Activated CD8-positive, alpha-beta T cell treated with anti-CD3 and anti-CD28 coated beads, Interleukin-2, amount 10 ng/mL, durations not matched to agents 7 days and 5 days (primary cell): ENCODE measurements at regions of chr1 and their contacts with region 1.

Region 1: GRCh38 chr1:2586154-2587070 is at the start of gene PRXL2B:
- DNase-seq: peak; percentile 99
- ATAC-seq: peak; percentile 86
- H3K4me3 Mint-ChIP-seq: peak within 1 kb of the TSS; percentile 82
- H3K27ac Mint-ChIP-seq: peak within 1 kb of the TSS; percentile 93
- H3K4me1 Mint-ChIP-seq: peaks cover 32% of the 10 kb centered on the region
- H3K27me3 Mint-ChIP-seq: no peaks in the 10 kb centered on the region
- total RNA-seq, gene PRXL2B: 35.6 to 40.6 TPM

Region 2: DNA sequence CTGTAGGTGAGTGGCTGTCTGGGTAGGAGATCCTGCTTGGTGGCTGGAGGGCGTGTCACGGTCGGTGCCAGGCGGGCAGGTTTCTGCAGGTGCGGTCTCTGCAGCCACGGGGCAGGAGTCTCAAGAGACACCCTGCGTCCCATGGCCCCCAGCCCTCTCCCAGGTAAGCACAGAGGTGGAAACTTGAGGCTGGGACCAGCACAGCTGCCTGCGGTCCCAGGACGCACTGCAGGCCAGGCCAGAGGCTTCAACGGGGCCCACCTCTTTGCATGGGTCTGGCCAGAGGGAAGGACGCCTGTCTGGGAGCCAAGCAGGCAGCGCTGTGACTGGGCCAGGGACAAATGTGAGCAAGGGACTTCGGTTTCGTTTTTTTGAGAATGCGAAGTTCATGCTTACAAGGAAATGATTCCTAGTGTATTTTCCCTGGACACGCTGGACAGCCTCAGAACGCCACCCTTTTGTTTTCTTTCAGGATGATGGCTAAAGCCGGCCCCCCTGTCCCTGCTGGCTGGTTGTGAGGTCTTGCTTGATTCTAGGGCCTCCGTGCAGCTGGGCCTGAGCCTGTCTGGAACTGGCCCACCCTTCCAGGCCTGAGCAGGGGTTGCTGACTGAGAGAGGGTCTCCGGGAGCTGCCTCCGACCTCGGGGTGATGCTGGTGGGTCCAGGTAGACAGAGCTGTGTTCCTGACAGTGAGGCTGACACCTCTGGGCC is 233.4 kb before region 1 on chr1:
- CTCF ChIA-PET with region 1: no interaction called
- POLR2A ChIA-PET with region 1: no interaction called
- DNase-seq: no peak
- ATAC-seq: no peak
- H3K4me3 Mint-ChIP-seq: no peak overlapping the region
- H3K27ac Mint-ChIP-seq: no peak overlapping the region
- H3K4me1 Mint-ChIP-seq: no peaks in the 10 kb centered on the region
- H3K27me3 Mint-ChIP-seq: no peaks in the 10 kb centered on the region

Region 3: DNA sequence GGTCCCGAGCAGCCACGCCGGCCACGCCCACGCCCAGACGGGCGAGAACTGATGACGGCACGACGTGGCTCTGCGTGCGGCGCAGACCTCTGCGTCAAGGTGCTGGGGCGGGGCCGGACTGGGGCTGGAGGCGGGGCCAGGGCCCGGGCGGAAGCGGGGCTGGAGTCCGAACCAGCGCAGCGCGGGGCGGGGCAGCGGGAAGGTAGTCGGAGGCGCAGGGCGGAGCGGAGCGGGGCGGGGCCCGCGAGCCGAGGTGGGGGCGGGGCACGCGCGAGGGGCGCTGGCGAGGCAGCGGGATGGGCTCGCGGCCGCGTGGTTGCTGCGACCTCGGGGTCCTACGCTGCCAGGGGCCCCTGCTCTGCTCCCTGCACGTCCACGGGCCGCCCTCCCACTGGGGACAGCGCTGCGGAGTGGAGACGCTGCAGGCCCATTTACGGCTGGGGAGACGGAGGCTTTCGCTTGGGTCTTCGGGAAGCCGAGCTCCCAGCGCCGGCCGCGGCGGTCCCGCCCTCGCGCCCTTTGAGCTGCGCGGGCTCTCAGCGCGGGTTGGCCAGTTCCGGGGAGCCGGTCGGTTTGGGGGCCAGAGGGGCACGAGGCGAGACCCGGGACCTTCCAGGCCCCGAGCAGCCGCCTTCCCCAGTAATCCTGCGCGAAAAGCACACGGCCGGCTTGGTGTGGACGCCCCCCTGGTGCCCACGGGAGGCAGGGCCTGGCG is 173.7 kb before region 1 on chr1 and contains the start of gene PEX10:
- CTCF ChIA-PET with region 1: interaction called, 3 read pairs
- POLR2A ChIA-PET with region 1: interaction called, 10 read pairs
- DNase-seq: peak; percentile 99
- ATAC-seq: peak; percentile 85
- H3K4me3 Mint-ChIP-seq: peak within 1 kb of the TSS; percentile 90
- H3K27ac Mint-ChIP-seq: peak within 1 kb of the TSS; percentile 94
- H3K4me1 Mint-ChIP-seq: peaks cover 45% of the 10 kb centered on the region
- H3K27me3 Mint-ChIP-seq: no peaks in the 10 kb centered on the region
- total RNA-seq, gene PEX10: 10.3 to 12.3 TPM

Region 4: GRCh38 chr1:2545759-2546514 is 40.5 kb before region 1 on chr1:
- CTCF ChIA-PET with region 1: interaction called, 28 read pairs
- POLR2A ChIA-PET with region 1: interaction called, 59 read pairs
- DNase-seq: peak; percentile 94
- ATAC-seq: peak; percentile 63
- H3K4me3 Mint-ChIP-seq: peak overlapping the region; percentile 85
- H3K27ac Mint-ChIP-seq: peak overlapping the region; percentile 98
- H3K4me1 Mint-ChIP-seq: peaks cover 37% of the 10 kb centered on the region
- H3K27me3 Mint-ChIP-seq: peaks cover 4% of the 10 kb centered on the region

Region 5: GRCh38 chr1:2561898-2562545 is 24.4 kb before region 1 on chr1:
- CTCF ChIA-PET with region 1: interaction called, 42 read pairs
- POLR2A ChIA-PET with region 1: interaction called, 130 read pairs
- DNase-seq: no peak
- ATAC-seq: no peak
- H3K4me3 Mint-ChIP-seq: no peak overlapping the region
- H3K27ac Mint-ChIP-seq: no peak overlapping the region
- H3K4me1 Mint-ChIP-seq: peaks cover 26% of the 10 kb centered on the region
- H3K27me3 Mint-ChIP-seq: no peaks in the 10 kb centered on the region

Region 6: DNA sequence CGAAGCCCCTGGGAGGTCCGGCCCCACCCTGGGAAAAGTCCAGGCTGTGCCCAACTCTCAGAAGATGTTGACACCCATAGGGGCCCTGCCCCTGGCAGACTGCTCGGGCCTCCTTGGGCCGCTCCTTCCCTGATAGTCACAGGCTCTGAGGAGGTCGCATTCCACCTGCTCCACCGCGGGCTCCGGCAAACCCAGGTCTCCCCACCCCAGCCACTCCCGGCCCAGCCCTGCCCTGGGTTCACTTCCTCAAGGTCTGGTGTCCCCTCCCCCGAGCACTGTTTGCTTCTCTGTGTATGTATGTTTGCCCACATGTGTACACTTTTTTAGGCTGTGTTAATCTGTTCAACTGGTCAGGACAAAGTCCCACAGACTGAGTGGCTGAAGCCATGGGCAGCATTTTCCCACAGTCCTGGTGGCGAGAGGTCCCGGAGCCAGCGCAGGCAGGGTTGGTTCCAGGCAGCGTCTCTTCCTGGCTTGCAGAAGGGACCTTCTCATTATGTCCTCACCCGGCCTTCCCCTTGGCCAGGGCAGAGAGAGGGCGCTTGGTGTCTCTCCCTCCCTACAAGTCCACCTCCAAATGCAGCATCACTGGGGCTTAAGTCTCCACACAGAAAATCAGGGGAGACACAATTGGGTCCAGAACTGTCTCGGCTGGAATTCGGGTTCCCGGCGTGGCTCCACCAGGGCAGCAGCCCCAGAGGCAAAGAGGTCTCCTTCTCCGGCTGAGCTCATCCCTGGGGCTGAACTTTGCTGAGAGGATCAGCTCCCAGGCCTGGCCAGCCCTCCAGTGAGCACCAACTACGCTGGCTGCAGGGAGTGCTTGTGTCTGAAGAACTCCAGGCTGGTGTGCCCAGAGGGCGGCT is 10.4 kb before region 1 on chr1:
- CTCF ChIA-PET with region 1: interaction called, 6 read pairs
- POLR2A ChIA-PET with region 1: interaction called, 17 read pairs
- DNase-seq: no peak
- ATAC-seq: no peak
- H3K4me3 Mint-ChIP-seq: no peak overlapping the region
- H3K27ac Mint-ChIP-seq: peak overlapping the region; percentile 55
- H3K4me1 Mint-ChIP-seq: peaks cover 56% of the 10 kb centered on the region
- H3K27me3 Mint-ChIP-seq: peaks cover 5% of the 10 kb centered on the region